Posterior vena cava (tissue), 2 donors: ENCODE measurements at regions of chr2 and their contacts with region 1.

Region 1: GRCh38 chr2:16773080-16773713 is 107.6 kb upstream of the CYRIA start:
- DNase-seq: no peak

Region 2: GRCh38 chr2:16948053-16948452 is 174.9 kb after region 1 on chr2:
- intact Hi-C with region 1: no loop called
- DNase-seq: no peak

Region 3: GRCh38 chr2:17148407-17149145 is 375.4 kb after region 1 on chr2:
- intact Hi-C with region 1: loop called in 1 of 2 experiments (anchors 5 kb)
- DNase-seq: no peak

Region 4: GRCh38 chr2:17309741-17310339 is 536.6 kb after region 1 on chr2:
- intact Hi-C with region 1: loop called in 1 of 2 experiments (anchors 5 kb)
- DNase-seq: no peak